Activated CD4-positive, alpha-beta T cell treated with anti-CD3 and anti-CD28 coated beads, Interleukin-2, amount 10 ng/mL, durations not matched to agents 7 days and 5 days (primary cell): ENCODE measurements at regions of chr6 and their contacts with region 1.

Region 1: GRCh38 chr6:43308101-43308989 is at the start of gene CRIP3:
- DNase-seq: peak; percentile 53
- H3K4me3 Mint-ChIP-seq: peak within 1 kb of the TSS; percentile 69
- H3K27ac Mint-ChIP-seq: no peak within 1 kb of the TSS
- H3K4me1 Mint-ChIP-seq: peaks cover 10% of the 10 kb centered on the region
- H3K27me3 Mint-ChIP-seq: peaks cover 7% of the 10 kb centered on the region
- total RNA-seq, gene CRIP3: 0.67 TPM in 1 of 2 experiments, not detected in the other

Region 2: GRCh38 chr6:43297644-43298564 is 10.4 kb before region 1 on chr6 and contains the start of gene SLC22A7:
- CTCF ChIA-PET with region 1: interaction called, 16 read pairs
- POLR2A ChIA-PET with region 1: no interaction called
- DNase-seq: no peak
- H3K4me3 Mint-ChIP-seq: no peak within 1 kb of the TSS
- H3K27ac Mint-ChIP-seq: no peak within 1 kb of the TSS
- H3K4me1 Mint-ChIP-seq: no peaks in the 10 kb centered on the region
- H3K27me3 Mint-ChIP-seq: peaks cover 8% of the 10 kb centered on the region
- total RNA-seq, gene SLC22A7: not detected

Region 3: DNA sequence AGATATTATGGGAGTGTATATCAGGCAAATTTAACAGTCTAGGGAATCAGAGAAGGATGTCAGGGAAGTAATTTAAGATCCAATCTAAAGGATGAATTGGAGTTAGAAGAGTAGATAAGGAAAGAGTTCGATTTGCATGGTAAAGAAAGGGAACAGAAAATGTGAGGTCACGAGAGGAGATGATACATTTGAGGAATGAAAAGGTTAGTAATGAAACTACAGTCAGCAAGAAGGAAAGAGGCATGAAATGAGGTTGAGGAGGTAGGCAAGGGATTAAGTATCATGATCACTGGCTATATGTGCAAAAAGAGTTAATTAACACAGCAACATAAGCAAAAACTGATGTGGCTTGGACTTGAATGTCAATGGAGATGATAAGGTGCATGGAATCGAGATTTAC is 38.7 kb after region 1 on chr6:
- CTCF ChIA-PET with region 1: no interaction called
- POLR2A ChIA-PET with region 1: no interaction called
- DNase-seq: no peak
- H3K4me3 Mint-ChIP-seq: no peak overlapping the region
- H3K27ac Mint-ChIP-seq: no peak overlapping the region
- H3K4me1 Mint-ChIP-seq: no peaks in the 10 kb centered on the region
- H3K27me3 Mint-ChIP-seq: no peaks in the 10 kb centered on the region